Ovary (tissue), 10 donors: ENCODE measurements at regions of chr1 and their contacts with region 1.

Region 1: GRCh38 chr1:43934101-43934985 is 742 bp downstream of the ARTN start:
- DNase-seq: peak; percentile 34 to 74 (median 64)
- H3K4me3 ChIP-seq: no peak overlapping the region
- H3K27ac ChIP-seq: no peak overlapping the region
- H3K4me1 ChIP-seq: peaks cover 4% of the 10 kb centered on the region
- H3K27me3 ChIP-seq: no peaks in the 10 kb centered on the region
- CTCF ChIP-seq: peak; percentile 74 to 81 (median 79)
- EP300 ChIP-seq: no peak
- POLR2A ChIP-seq: no peak

Region 2: DNA sequence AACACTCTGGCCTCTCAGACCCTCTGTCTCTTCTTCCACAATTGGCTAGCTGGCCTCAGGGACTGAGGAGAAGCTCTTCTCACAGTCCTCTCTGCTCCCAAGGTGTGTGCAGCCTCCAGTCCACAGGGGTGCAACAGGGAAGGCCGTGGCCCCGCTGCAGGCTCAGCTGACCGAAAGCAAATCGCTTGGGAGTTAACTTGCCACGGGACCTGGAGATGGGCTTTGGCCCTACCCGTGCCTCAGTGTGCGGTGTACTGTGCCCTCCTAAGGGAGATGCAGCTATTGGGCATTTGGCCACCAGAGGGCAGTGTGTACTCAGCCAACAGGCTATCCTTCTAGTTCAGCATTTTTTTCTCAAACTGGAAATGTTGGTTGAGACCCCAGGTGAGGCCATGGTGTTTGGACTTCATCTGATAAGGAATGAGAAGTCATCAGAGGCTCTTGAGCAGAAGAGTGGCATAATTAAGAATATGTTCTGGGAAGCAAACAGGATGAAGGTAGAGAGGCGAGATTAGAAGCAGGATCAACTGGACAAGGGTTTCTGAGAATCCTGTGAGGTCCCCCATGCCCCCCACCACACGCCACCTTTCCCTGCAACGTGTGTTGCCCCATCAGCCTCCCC is 707.1 kb before region 1 on chr1:
- intact Hi-C with region 1: loop called in 1 of 4 experiments (anchors 10 kb)
- DNase-seq: peak; percentile 80 to 90 (median 89)
- H3K4me3 ChIP-seq: no peak overlapping the region
- H3K27ac ChIP-seq: no peak overlapping the region
- H3K4me1 ChIP-seq: peaks cover 7% of the 10 kb centered on the region
- H3K27me3 ChIP-seq: no peaks in the 10 kb centered on the region
- CTCF ChIP-seq: peak; percentile 80 to 94 (median 88)
- EP300 ChIP-seq: no peak
- POLR2A ChIP-seq: no peak

Region 3: DNA sequence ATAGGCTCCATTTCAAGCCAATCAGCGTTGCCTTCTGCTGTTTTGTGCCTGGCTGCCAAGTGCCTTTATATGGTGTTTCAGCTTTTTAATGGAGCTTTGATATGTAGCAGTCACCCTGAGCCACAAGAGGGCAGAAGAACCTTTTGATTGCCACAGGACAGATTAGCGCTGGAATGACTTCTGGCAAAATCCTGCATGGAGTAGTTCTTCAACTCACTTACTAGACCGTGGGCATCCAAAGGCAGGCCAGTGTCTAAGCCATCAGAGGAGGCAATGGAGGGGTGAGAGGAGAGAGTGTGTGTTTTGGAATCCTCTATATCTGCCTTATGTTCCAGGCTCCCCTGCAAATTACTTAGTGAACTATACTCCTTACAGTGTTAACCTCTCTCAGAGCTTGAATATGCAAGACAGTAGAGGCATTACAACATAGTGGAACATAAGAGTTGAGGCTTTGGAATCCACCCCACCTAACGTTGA is 170.8 kb before region 1 on chr1:
- intact Hi-C with region 1: loop called (anchors 1 to 5 kb)
- DNase-seq: peak; percentile 54 to 81 (median 64)
- H3K4me3 ChIP-seq: no peak overlapping the region
- H3K27ac ChIP-seq: no peak overlapping the region
- H3K4me1 ChIP-seq: peaks cover 2% of the 10 kb centered on the region
- H3K27me3 ChIP-seq: no peaks in the 10 kb centered on the region
- CTCF ChIP-seq: peak; percentile 61 to 83 (median 80)
- EP300 ChIP-seq: no peak
- POLR2A ChIP-seq: no peak